ENCODE measurements at regions of chr2 and their contacts with region 1.

Region 1: GRCh38 chr2:144414324-144414845 is 105.5 kb downstream of the ZEB2 start:
- DNase-seq: peak; percentile 21 to 78 (median 69)
- H3K4me3 ChIP-seq: no peak overlapping the region
- H3K27ac ChIP-seq: peak overlapping the region in 1 of 2 experiments; percentile 14
- H3K4me1 ChIP-seq: peaks cover 0 to 8% (median 3%) of the 10 kb centered on the region in 4 experiments
- H3K27me3 ChIP-seq: no peaks in the 10 kb centered on the region

Region 2: GRCh38 chr2:144227427-144228105 is 186.8 kb before region 1 on chr2:
- CTCF ChIA-PET with region 1: no interaction called
- POLR2A ChIA-PET with region 1: no interaction called
- DNase-seq: no peak
- H3K4me3 ChIP-seq: peak overlapping the region in 1 of 7 experiments; percentile 2
- H3K27ac ChIP-seq: no peak overlapping the region
- H3K4me1 ChIP-seq: peaks cover 2 to 26% (median 11%) of the 10 kb centered on the region in 4 experiments
- H3K27me3 ChIP-seq: no peaks in the 10 kb centered on the region

Region 3: GRCh38 chr2:144332356-144333142 is 81.8 kb before region 1 on chr2:
- CTCF ChIA-PET with region 1: no interaction called
- POLR2A ChIA-PET with region 1: no interaction called
- DNase-seq: peak; percentile 86 to 94 (median 92)
- H3K4me3 ChIP-seq: peak overlapping the region; percentile 67 to 96 (median 83)
- H3K27ac ChIP-seq: peak overlapping the region in 1 of 2 experiments; percentile 86
- H3K4me1 ChIP-seq: peaks cover 0 to 26% (median 8%) of the 10 kb centered on the region in 4 experiments
- H3K27me3 ChIP-seq: no peaks in the 10 kb centered on the region

Region 4: DNA sequence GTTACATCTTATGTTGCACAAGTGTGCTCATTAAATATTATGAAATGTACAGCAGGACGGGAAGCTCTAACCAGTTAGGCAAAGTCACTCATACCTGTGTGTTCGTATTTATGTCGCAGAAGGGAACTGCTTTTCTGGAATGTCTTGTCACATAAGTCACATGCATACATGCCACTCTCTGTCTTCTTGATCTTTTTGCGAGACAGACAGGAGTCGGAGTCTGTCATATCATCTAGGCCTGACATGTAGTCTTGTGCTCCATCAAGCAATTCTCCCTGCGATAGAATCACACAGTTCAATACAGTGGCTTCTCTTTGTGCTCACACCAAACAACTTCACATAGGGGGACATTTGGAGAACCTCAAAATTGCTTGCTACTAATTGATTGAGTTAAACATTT is 18.1 kb before region 1 on chr2:
- CTCF ChIA-PET with region 1: interaction called, 10 read pairs
- POLR2A ChIA-PET with region 1: no interaction called
- DNase-seq: no peak
- H3K4me3 ChIP-seq: no peak overlapping the region
- H3K27ac ChIP-seq: no peak overlapping the region
- H3K4me1 ChIP-seq: no peaks in the 10 kb centered on the region
- H3K27me3 ChIP-seq: no peaks in the 10 kb centered on the region

Measured in common myeloid progenitor, CD34-positive (primary cell).